ENCODE measurements at regions of chr3 and their contacts with region 1.

Region 1: GRCh38 chr3:125107861-125108567 is 52.2 kb upstream of the HEG1 start:
- DNase-seq: peak; percentile 69
- H3K4me3 Mint-ChIP-seq: no peak overlapping the region
- H3K27ac Mint-ChIP-seq: no peak overlapping the region
- H3K4me1 Mint-ChIP-seq: peaks cover 37% of the 10 kb centered on the region
- H3K27me3 Mint-ChIP-seq: no peaks in the 10 kb centered on the region
- CTCF ChIP-seq: no peak

Region 2: GRCh38 chr3:125055913-125056745 is 51.9 kb before region 1 on chr3 and contains the start of gene HEG1:
- CTCF ChIA-PET with region 1: no interaction called
- POLR2A ChIA-PET with region 1: interaction called, 9 read pairs
- intact Hi-C with region 1: loop called (anchors 5 kb)
- DNase-seq: peak; percentile 69
- H3K4me3 Mint-ChIP-seq: peak within 1 kb of the TSS; percentile 81
- H3K27ac Mint-ChIP-seq: peak within 1 kb of the TSS; percentile 73
- H3K4me1 Mint-ChIP-seq: peaks cover 51% of the 10 kb centered on the region
- H3K27me3 Mint-ChIP-seq: no peaks in the 10 kb centered on the region
- CTCF ChIP-seq: no peak
- total RNA-seq, gene HEG1: 8.6 and 10.3 TPM in 2 replicates

Region 3: GRCh38 chr3:125062888-125063618 is 45.0 kb before region 1 on chr3:
- CTCF ChIA-PET with region 1: no interaction called
- POLR2A ChIA-PET with region 1: interaction called, 10 read pairs
- intact Hi-C with region 1: loop called (anchors 5 kb)
- DNase-seq: peak; percentile 83
- H3K4me3 Mint-ChIP-seq: peak overlapping the region; percentile 11
- H3K27ac Mint-ChIP-seq: peak overlapping the region; percentile 2
- H3K4me1 Mint-ChIP-seq: peaks cover 48% of the 10 kb centered on the region
- H3K27me3 Mint-ChIP-seq: no peaks in the 10 kb centered on the region
- CTCF ChIP-seq: no peak

Region 4: GRCh38 chr3:125431912-125432790 is 324.1 kb after region 1 on chr3:
- CTCF ChIA-PET with region 1: no interaction called
- POLR2A ChIA-PET with region 1: no interaction called
- intact Hi-C with region 1: no loop called
- DNase-seq: no peak
- H3K4me3 Mint-ChIP-seq: no peak overlapping the region
- H3K27ac Mint-ChIP-seq: no peak overlapping the region
- H3K4me1 Mint-ChIP-seq: peaks cover 19% of the 10 kb centered on the region
- H3K27me3 Mint-ChIP-seq: no peaks in the 10 kb centered on the region
- CTCF ChIP-seq: no peak

Measured in MCF 10A (cell line).